ENCODE measurements at regions of chr1 and their contacts with region 1.

Region 1: GRCh38 chr1:111709986-111710385 is 29.2 kb downstream of the INKA2 start:
- DNase-seq: no peak
- ATAC-seq: no peak
- H3K4me3 ChIP-seq: no peak overlapping the region
- H3K4me3 Mint-ChIP-seq: no peak overlapping the region
- H3K27ac ChIP-seq: no peak overlapping the region
- H3K27ac Mint-ChIP-seq: peak overlapping the region; percentile 2
- H3K4me1 ChIP-seq: no peaks in the 10 kb centered on the region
- H3K4me1 Mint-ChIP-seq: peaks cover 9% of the 10 kb centered on the region
- H3K27me3 ChIP-seq: no peaks in the 10 kb centered on the region
- H3K27me3 Mint-ChIP-seq: no peaks in the 10 kb centered on the region
- CTCF ChIP-seq: no peak

Region 2: GRCh38 chr1:111441573-111442192 is 268.3 kb before region 1 on chr1:
- CTCF ChIA-PET with region 1: no interaction called
- POLR2A ChIA-PET with region 1: no interaction called
- intact Hi-C with region 1: no loop called
- DNase-seq: peak; percentile 58 to 83 (median 70)
- ATAC-seq: peak; percentile 98
- H3K4me3 ChIP-seq: no peak overlapping the region
- H3K4me3 Mint-ChIP-seq: no peak overlapping the region
- H3K27ac ChIP-seq: no peak overlapping the region
- H3K27ac Mint-ChIP-seq: peak overlapping the region; percentile 84
- H3K4me1 ChIP-seq: peaks cover 14% of the 10 kb centered on the region
- H3K4me1 Mint-ChIP-seq: peaks cover 54% of the 10 kb centered on the region
- H3K27me3 ChIP-seq: no peaks in the 10 kb centered on the region
- H3K27me3 Mint-ChIP-seq: no peaks in the 10 kb centered on the region
- CTCF ChIP-seq: peak; percentile 80

Region 3: GRCh38 chr1:111624382-111624781 is 85.6 kb before region 1 on chr1:
- CTCF ChIA-PET with region 1: no interaction called
- POLR2A ChIA-PET with region 1: no interaction called
- intact Hi-C with region 1: no loop called
- DNase-seq: peak in 3 of 14 experiments; percentile 71 to 80 (median 74)
- ATAC-seq: peak; percentile 17
- H3K4me3 ChIP-seq: peak overlapping the region; percentile 8
- H3K4me3 Mint-ChIP-seq: peak overlapping the region; percentile 78
- H3K27ac ChIP-seq: peak overlapping the region in 1 of 2 donors; percentile 63
- H3K27ac Mint-ChIP-seq: peak overlapping the region; percentile 95
- H3K4me1 ChIP-seq: peaks cover 19% of the 10 kb centered on the region
- H3K4me1 Mint-ChIP-seq: peaks cover 83% of the 10 kb centered on the region
- H3K27me3 ChIP-seq: no peaks in the 10 kb centered on the region
- H3K27me3 Mint-ChIP-seq: no peaks in the 10 kb centered on the region
- CTCF ChIP-seq: no peak

Region 4: DNA sequence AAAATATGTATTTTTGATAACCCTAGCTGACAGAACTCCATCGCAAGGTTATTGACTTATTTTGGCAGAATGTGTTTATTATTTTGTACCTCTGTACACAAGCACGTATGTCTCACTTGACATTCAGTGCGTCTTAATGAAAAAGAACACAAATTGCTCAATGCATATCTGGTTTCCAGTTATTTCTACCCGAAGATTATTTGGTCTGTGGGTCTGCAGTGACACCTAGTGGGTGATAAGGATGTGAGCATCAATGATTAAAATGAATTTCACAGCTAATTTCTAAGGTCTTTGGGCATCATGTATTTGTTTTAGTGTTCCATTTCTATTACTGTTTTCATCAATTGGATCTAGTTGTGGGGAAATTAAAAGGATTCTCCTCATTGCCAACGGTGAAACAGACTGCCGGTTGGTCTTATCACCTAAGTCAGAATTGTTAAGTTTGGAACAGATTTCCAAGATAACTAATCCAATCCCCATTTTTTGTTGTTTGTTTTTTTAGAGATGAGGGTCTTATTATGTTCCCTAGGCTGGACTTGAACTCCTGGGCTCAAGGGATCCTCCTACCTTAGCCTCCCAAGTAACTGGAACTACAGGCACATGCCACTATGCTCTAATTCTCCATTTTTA is 59.6 kb after region 1 on chr1:
- CTCF ChIA-PET with region 1: interaction called, 96 read pairs
- POLR2A ChIA-PET with region 1: interaction called, 6 read pairs
- intact Hi-C with region 1: loop called (anchors 1 kb)
- DNase-seq: peak in 12 of 14 experiments; percentile 11 to 84 (median 42)
- ATAC-seq: peak; percentile 68
- H3K4me3 ChIP-seq: no peak overlapping the region
- H3K4me3 Mint-ChIP-seq: no peak overlapping the region
- H3K27ac ChIP-seq: no peak overlapping the region
- H3K27ac Mint-ChIP-seq: peak overlapping the region; percentile 40
- H3K4me1 ChIP-seq: no peaks in the 10 kb centered on the region
- H3K4me1 Mint-ChIP-seq: peaks cover 9% of the 10 kb centered on the region
- H3K27me3 ChIP-seq: no peaks in the 10 kb centered on the region
- H3K27me3 Mint-ChIP-seq: no peaks in the 10 kb centered on the region
- CTCF ChIP-seq: peak; percentile 82

Region 5: DNA sequence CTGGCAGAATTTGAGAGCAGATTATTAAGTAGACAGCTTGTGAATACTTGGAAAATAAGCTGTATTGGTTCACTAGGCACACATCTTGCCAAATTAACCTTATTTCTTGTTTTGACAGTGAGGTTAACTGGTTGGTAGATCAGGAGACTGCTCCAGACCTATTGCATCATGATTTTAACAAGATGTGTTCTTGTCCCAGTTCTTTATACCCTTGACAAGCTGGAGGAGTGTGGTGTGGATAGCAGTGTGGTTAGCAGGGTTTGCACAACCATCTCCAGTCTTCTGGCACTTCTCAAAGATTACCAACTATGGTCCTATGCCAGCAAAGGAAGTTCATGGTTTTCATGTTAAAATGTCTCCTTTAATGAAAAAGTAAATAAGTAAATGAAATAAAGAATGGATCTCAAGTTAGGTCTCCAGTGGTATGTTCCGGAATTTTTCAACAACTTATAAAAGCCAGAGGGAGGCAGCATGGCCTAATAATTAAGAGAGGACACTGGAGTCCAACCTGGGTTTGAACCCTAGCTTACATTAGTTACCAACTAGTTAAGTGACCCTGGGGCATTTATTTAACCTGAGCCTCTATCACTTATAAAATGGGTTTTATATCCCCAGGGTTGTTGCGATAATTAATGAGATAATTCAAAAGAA is 79.8 kb after region 1 on chr1:
- CTCF ChIA-PET with region 1: no interaction called
- POLR2A ChIA-PET with region 1: no interaction called
- intact Hi-C with region 1: no loop called
- DNase-seq: no peak
- ATAC-seq: no peak
- H3K4me3 ChIP-seq: no peak overlapping the region
- H3K4me3 Mint-ChIP-seq: no peak overlapping the region
- H3K27ac ChIP-seq: no peak overlapping the region
- H3K27ac Mint-ChIP-seq: no peak overlapping the region
- H3K4me1 ChIP-seq: no peaks in the 10 kb centered on the region
- H3K4me1 Mint-ChIP-seq: no peaks in the 10 kb centered on the region
- H3K27me3 ChIP-seq: no peaks in the 10 kb centered on the region
- H3K27me3 Mint-ChIP-seq: peaks cover 17% of the 10 kb centered on the region
- CTCF ChIP-seq: no peak

Measured in CD4-positive, alpha-beta T cell (primary cell).